ENCODE measurements at regions of chr7 and their contacts with region 1.

Region 1: GRCh38 chr7:29574659-29575058 is 11.0 kb downstream of the PRR15 start:
- DNase-seq: no peak
- H3K4me3 ChIP-seq: no peak overlapping the region
- H3K27ac ChIP-seq: no peak overlapping the region
- H3K4me1 ChIP-seq: no peaks in the 10 kb centered on the region
- H3K27me3 ChIP-seq: peaks cover 6% of the 10 kb centered on the region; the same call in 1 of the 2 replicates
- CTCF ChIP-seq: no peak
- EP300 ChIP-seq: no peak
- RAD21 ChIP-seq: no peak

Region 2: GRCh38 chr7:29319719-29320521 is 254.7 kb before region 1 on chr7:
- CTCF ChIA-PET with region 1: no interaction called
- POLR2A ChIA-PET with region 1: no interaction called
- DNase-seq: peak; percentile 73
- H3K4me3 ChIP-seq: peak overlapping the region in 1 of 2 experiments; percentile 9; a peak in 1 of 4 replicates
- H3K27ac ChIP-seq: peak overlapping the region in 1 of 2 experiments; percentile 99; a peak in 3 of 4 replicates
- H3K4me1 ChIP-seq: peaks cover 10 to 38% of the 10 kb centered on the region in 2 experiments; a peak in 3 of 4 replicates
- H3K27me3 ChIP-seq: no peaks in the 10 kb centered on the region
- CTCF ChIP-seq: no peak
- EP300 ChIP-seq: peak in 1 of 2 experiments; percentile 84; a peak in 2 of 4 replicates
- RAD21 ChIP-seq: peak; percentile 29

Region 3: DNA sequence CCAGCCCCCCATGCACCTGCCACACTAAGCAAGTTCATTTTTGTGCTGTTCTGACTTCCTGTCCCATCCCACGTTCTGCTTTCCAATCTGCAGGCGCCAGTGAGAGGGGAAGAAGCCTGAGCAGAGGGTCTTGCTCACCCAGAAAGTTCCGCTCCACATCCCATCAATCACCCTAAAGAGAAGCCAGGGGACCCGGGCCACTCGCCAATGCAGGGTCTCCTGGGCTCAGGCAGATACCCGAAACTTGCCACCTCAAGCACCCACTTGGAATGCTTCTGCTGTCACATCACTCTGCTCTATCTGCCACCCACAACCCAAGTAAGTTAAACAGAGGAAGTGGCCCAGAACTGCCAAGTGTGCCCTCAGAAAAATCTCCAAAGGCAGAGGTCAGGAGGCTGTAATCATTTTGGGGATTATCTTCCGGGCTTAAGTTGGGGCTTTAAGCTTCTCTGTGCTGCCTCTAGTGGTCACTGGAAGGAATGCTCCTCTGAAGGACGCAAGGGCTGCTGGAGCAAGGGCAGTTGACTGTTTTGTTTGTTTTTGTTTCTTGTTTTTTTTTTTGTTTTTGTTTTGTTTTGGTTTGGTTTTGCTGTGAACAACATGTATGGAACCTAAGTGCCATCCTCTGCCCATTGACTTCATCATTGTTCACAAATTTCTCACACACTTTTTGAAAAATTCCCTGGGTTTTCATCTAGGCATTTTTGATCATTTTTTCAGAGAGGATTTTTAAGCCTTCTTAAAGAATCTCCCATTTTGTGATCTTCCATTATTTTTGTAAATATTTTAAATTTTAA is 14.4 kb after region 1 on chr7:
- CTCF ChIA-PET with region 1: interaction called, 14 read pairs
- POLR2A ChIA-PET with region 1: no interaction called
- DNase-seq: peak; percentile 71
- H3K4me3 ChIP-seq: no peak overlapping the region
- H3K27ac ChIP-seq: no peak overlapping the region
- H3K4me1 ChIP-seq: no peaks in the 10 kb centered on the region; a peak in 1 of 4 replicates
- H3K27me3 ChIP-seq: no peaks in the 10 kb centered on the region
- CTCF ChIP-seq: peak; percentile 98
- EP300 ChIP-seq: no peak
- RAD21 ChIP-seq: peak; percentile 56

Measured in SK-N-SH (cell line).